ENCODE measurements at regions of chr19 and their contacts with region 1.

Region 1: DNA sequence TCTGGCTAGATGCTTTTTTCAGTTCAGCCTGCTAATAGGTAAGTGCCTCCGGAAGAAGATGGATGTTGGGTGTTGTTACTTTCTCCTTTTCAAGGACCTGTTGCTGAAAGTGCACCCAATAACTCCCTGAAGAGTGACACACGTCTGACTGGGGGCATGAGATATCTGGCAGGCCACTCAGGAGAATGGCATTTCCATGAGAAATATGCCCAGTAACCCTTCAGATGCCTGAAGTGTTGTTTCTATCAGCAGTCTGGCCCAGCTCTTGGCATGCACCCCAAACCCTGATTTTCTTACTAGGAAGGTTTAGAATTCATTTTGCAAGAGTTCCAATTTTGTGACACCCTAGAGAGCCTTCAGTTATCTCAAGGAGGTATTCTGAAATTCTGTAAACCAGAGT is 71.5 kb downstream of the ARHGAP35 start:
- DNase-seq: no peak
- H3K4me3 ChIP-seq: no peak overlapping the region
- H3K27ac ChIP-seq: no peak overlapping the region
- H3K4me1 ChIP-seq: peaks cover 43% of the 10 kb centered on the region
- H3K27me3 ChIP-seq: no peaks in the 10 kb centered on the region
- CTCF ChIP-seq: no peak

Region 2: DNA sequence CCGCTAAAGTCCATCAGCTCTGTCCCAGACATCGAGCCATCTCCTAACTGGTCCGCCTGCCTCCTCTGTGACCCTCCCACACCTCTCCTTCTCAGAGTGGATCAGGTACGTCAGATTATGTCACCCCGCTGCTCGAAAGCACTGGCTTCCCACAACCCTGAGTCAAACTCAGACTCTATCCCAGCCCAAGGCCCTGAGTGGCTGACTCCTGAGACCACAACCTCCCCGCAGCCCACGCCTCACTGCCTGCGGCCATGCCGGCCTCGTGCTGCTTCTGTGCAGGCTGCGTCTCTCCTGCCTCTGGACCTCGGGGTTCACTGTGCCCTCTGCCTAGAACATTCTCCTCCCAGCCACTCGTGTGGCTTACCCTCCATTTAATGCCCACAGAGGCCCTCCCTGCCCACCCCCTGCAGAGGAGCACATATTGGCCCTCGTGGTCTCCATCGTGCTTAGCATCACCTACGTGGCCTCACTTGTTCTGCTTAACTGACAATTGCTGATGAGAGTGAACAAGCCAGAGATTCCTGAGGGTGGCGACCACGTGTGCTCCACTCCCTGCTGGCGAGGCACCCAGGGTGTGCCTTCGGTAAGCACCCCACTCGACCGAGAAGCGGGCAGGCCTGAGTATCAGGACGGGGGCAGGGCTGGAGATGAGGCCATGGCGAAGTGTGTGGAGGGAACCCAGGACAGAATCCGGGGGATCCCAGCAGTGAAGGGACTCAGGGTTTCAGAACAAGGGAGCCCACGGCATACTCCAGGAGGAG is 200.0 kb before region 1 on chr19:
- CTCF ChIA-PET with region 1: interaction called, 10 read pairs
- POLR2A ChIA-PET with region 1: no interaction called
- intact Hi-C with region 1: no loop called
- DNase-seq: no peak
- H3K4me3 ChIP-seq: no peak overlapping the region
- H3K27ac ChIP-seq: no peak overlapping the region
- H3K4me1 ChIP-seq: no peaks in the 10 kb centered on the region
- H3K27me3 ChIP-seq: no peaks in the 10 kb centered on the region
- CTCF ChIP-seq: no peak

Region 3: GRCh38 chr19:46913852-46914430 is 18.4 kb before region 1 on chr19:
- CTCF ChIA-PET with region 1: no interaction called
- POLR2A ChIA-PET with region 1: no interaction called
- intact Hi-C with region 1: no loop called
- DNase-seq: peak; percentile 62
- H3K4me3 ChIP-seq: peak overlapping the region; percentile 1
- H3K27ac ChIP-seq: peak overlapping the region; percentile 67
- H3K4me1 ChIP-seq: peaks cover 33% of the 10 kb centered on the region
- H3K27me3 ChIP-seq: no peaks in the 10 kb centered on the region
- CTCF ChIP-seq: no peak

Measured in A673 (cell line).